CD4-positive, alpha-beta memory T cell (primary cell): ENCODE measurements at regions of chr17 and their contacts with region 1.

Region 1: DNA sequence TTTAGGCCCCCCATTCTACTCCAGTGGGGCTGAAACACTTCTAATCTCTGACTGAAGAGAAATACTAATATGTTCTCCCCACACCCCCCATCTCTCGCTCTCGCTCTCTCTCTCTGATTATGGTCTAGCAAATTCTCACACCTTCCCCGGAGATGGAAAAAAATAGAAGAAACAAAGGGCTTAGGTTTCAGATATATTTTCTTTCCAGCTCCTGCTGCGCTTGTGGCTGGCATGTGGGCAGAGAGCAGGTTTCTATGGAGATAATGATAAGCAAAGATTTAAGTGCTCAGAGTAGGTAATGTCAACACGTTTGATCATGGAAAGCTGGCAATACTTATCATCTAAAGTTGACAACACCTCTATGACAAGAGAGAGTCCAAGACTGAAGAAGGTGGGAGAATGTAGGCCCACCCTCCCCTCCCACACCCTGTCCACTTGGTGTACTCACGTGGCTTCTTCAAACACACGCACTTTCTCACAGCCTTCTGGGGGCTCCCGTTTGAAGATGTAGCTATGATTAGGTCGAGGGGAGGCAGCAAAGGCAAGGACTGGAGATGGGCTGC is 8.0 kb upstream of the SLC35B1 start:
- DNase-seq: peak; percentile 77 to 89 (median 84)
- H3K4me3 ChIP-seq: peak overlapping the region in 1 of 2 donors; percentile 1
- H3K4me3 Mint-ChIP-seq: peak overlapping the region; percentile 52 to 85 (median 60)
- H3K27ac ChIP-seq: peak overlapping the region; percentile 78
- H3K27ac Mint-ChIP-seq: peak overlapping the region; percentile 92 to 99 (median 98)
- H3K4me1 ChIP-seq: peaks cover 46% of the 10 kb centered on the region
- H3K4me1 Mint-ChIP-seq: peaks cover 37 to 53% (median 44%) of the 10 kb centered on the region in 4 donors
- H3K27me3 ChIP-seq: no peaks in the 10 kb centered on the region
- H3K27me3 Mint-ChIP-seq: peaks cover 0 to 2% of the 10 kb centered on the region in 2 donors

Region 2: GRCh38 chr17:49739641-49740271 is 24.0 kb after region 1 on chr17:
- CTCF ChIA-PET with region 1: interaction called, 13 read pairs
- POLR2A ChIA-PET with region 1: interaction called, 233 read pairs
- intact Hi-C with region 1: loop called (anchors 1 kb)
- DNase-seq: peak; percentile 96 to 100 (median 99)
- H3K4me3 ChIP-seq: peak overlapping the region; percentile 32 to 80
- H3K4me3 Mint-ChIP-seq: peak overlapping the region; percentile 93 to 99 (median 97)
- H3K27ac ChIP-seq: peak overlapping the region; percentile 99
- H3K27ac Mint-ChIP-seq: peak overlapping the region; percentile 99 to 100 (median 100)
- H3K4me1 ChIP-seq: peaks cover 97% of the 10 kb centered on the region
- H3K4me1 Mint-ChIP-seq: peaks cover 68 to 94% (median 78%) of the 10 kb centered on the region in 4 donors
- H3K27me3 ChIP-seq: no peaks in the 10 kb centered on the region
- H3K27me3 Mint-ChIP-seq: no peaks in the 10 kb centered on the region

Region 3: DNA sequence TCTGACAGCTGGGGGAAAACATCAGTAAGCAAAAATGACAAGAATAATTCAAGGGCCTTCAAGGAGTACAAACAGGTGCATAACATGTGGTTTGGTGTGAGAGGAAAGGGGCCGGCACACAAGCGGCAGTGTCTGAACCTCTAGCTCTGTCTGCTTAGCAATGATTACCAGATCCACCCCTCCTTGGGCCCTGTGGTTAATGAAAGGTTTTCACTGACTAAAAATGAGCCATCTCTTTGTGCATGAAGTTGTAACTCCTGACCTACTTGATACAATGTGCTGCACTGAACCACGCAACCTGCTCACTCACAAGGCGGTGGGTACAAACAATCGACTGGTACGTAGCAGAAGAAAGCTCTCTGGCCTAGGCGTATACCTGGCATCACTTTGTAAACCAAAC is 33.0 kb after region 1 on chr17:
- CTCF ChIA-PET with region 1: interaction called, 22 read pairs
- POLR2A ChIA-PET with region 1: interaction called, 233 read pairs
- intact Hi-C with region 1: no loop called
- DNase-seq: peak; percentile 74 to 91 (median 80)
- H3K4me3 ChIP-seq: peak overlapping the region in 1 of 2 donors; percentile 27
- H3K4me3 Mint-ChIP-seq: peak overlapping the region; percentile 38 to 90 (median 80)
- H3K27ac ChIP-seq: peak overlapping the region; percentile 89
- H3K27ac Mint-ChIP-seq: peak overlapping the region; percentile 94 to 99 (median 97)
- H3K4me1 ChIP-seq: peaks cover 97% of the 10 kb centered on the region
- H3K4me1 Mint-ChIP-seq: peaks cover 56 to 91% (median 76%) of the 10 kb centered on the region in 4 donors
- H3K27me3 ChIP-seq: no peaks in the 10 kb centered on the region
- H3K27me3 Mint-ChIP-seq: no peaks in the 10 kb centered on the region